Aorta (tissue), 5 donors: ENCODE measurements at regions of chr9 and their contacts with region 1.

Region 1: GRCh38 chr9:20622330-20623020 is at the start of gene MLLT3:
- DNase-seq: peak; percentile 97 to 98
- ATAC-seq: peak; percentile 97
- H3K4me3 ChIP-seq: peak within 1 kb of the TSS; percentile 70 to 82
- H3K27ac ChIP-seq: peak within 1 kb of the TSS in 1 of 2 donors; percentile 50
- H3K4me1 ChIP-seq: peaks cover 0 to 3% of the 10 kb centered on the region in 2 donors
- H3K27me3 ChIP-seq: no peaks in the 10 kb centered on the region
- total RNA-seq, gene MLLT3: 8.1 to 16.5 TPM

Region 2: GRCh38 chr9:20684035-20684872 is 61.8 kb after region 1 on chr9 and contains the start of gene FOCAD:
- intact Hi-C with region 1: loop called (anchors 2 to 5 kb)
- DNase-seq: peak; percentile 97 to 99
- ATAC-seq: peak; percentile 99
- H3K4me3 ChIP-seq: peak within 1 kb of the TSS; percentile 65 to 81
- H3K27ac ChIP-seq: peak within 1 kb of the TSS; percentile 83
- H3K4me1 ChIP-seq: peaks cover 0 to 3% of the 10 kb centered on the region in 2 donors
- H3K27me3 ChIP-seq: no peaks in the 10 kb centered on the region
- total RNA-seq, gene FOCAD: 26.7 to 30.4 TPM

Region 3: GRCh38 chr9:20728493-20729220 is 106.2 kb after region 1 on chr9:
- intact Hi-C with region 1: no loop called
- DNase-seq: no peak
- ATAC-seq: no peak
- H3K4me3 ChIP-seq: no peak overlapping the region
- H3K27ac ChIP-seq: no peak overlapping the region
- H3K4me1 ChIP-seq: no peaks in the 10 kb centered on the region
- H3K27me3 ChIP-seq: no peaks in the 10 kb centered on the region

Region 4: GRCh38 chr9:20940447-20941173 is 318.1 kb after region 1 on chr9:
- intact Hi-C with region 1: no loop called
- DNase-seq: no peak
- ATAC-seq: peak; percentile 33
- H3K4me3 ChIP-seq: no peak overlapping the region
- H3K27ac ChIP-seq: no peak overlapping the region
- H3K4me1 ChIP-seq: peaks cover 0 to 2% of the 10 kb centered on the region in 2 donors
- H3K27me3 ChIP-seq: no peaks in the 10 kb centered on the region

Region 5: DNA sequence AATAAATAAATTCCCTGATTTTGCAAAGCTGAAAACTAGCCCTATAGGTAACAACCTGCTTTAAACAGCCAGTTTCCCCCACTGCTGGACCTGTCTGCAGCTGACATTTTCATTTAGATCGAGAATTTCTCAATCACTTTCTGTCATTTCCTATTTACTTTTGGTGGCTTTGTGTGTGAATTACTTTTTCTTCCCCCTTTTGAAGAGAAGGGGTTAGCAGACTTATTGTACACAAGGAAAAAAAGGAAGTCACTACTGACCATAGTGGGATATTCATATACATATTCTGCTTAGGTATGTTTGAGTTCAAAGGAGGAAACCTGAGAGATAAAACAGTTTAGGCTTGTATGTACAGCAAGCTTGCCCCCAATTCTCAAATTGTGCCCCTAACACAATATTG is 482.3 kb after region 1 on chr9:
- intact Hi-C with region 1: loop called in 1 of 2 experiments (anchors 5 kb)
- DNase-seq: no peak
- ATAC-seq: no peak
- H3K4me3 ChIP-seq: no peak overlapping the region
- H3K27ac ChIP-seq: no peak overlapping the region
- H3K4me1 ChIP-seq: peaks cover 0 to 2% of the 10 kb centered on the region in 2 donors
- H3K27me3 ChIP-seq: no peaks in the 10 kb centered on the region